Activated CD4-positive, alpha-beta T cell treated with anti-CD3 and anti-CD28 coated beads for 36 hours (primary cell): ENCODE measurements at regions of chr7 and their contacts with region 1.

Region 1: DNA sequence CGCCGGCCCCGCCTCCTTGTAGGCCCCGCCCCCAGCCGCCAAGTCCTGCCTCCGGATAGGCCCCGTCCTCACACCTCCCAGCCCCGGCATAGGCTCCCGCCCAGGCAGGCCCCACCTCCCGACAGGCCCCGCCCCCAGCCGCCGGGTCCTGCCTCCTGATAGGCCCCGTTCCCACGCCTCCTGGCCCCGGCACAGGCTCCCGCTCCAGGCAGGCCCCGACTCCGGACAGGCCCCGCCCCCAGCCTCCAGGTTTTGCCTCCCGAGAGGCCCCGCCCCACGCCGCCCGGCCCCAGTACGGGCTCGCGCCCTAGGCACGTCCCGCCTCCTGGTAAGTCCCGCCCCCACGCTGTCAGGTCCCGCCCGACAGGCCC is 237 bp upstream of the MICALL2 start:
- DNase-seq: peak; percentile 100
- ATAC-seq: peak; percentile 98
- H3K4me3 Mint-ChIP-seq: peak overlapping the region; percentile 59
- H3K27ac Mint-ChIP-seq: no peak overlapping the region
- H3K4me1 Mint-ChIP-seq: peaks cover 7% of the 10 kb centered on the region
- H3K27me3 Mint-ChIP-seq: no peaks in the 10 kb centered on the region

Region 2: GRCh38 chr7:1137510-1138167 is 321.9 kb before region 1 on chr7:
- CTCF ChIA-PET with region 1: no interaction called
- POLR2A ChIA-PET with region 1: no interaction called
- intact Hi-C with region 1: loop called in 1 of 2 experiments (anchors 1 kb)
- DNase-seq: no peak
- ATAC-seq: peak; percentile 54
- H3K4me3 Mint-ChIP-seq: peak overlapping the region; percentile 75
- H3K27ac Mint-ChIP-seq: peak overlapping the region; percentile 69
- H3K4me1 Mint-ChIP-seq: peaks cover 21% of the 10 kb centered on the region
- H3K27me3 Mint-ChIP-seq: no peaks in the 10 kb centered on the region

Region 3: DNA sequence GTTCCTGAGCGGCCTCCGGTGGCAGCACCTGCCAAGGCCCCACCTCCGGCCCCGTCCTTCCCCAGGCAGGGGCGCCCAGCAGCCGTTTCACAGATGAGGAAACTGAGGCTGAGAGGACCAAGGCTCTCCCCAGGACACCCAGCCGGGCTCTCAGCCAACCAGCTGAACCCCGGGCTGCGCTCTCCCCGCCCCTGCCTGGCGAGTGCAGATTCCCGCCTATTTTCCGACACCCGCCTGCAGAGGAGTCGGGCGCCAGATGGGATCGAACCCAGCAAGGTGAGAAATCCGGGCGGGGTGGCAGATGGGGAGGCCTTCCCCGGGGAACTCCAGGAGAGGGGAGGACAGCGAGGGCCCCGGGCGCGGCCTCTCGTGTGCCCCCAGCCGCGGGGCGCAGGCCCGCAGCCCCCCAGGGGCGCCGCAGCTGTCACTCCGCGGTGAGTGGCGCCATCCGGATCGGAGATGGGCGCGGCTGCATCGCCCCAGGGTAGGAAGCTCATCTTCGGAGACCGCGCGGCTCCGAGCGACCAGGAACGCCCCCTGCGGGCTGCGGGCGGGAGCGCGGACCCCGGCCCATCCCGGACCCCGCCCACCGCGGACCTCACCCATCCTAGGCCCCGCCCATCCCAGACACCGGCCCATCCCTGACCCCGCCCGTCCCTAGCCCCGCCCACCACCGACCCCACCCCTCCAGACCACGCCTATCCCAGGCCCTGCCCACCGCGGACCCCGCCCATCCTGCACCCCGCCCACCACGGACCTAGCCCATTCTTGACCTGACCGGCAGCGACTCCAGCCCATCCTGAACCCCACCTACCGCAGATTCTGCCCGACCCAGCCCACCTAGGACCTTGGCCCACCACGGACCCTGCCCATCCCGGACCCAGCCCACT is 90.6 kb before region 1 on chr7:
- CTCF ChIA-PET with region 1: no interaction called
- POLR2A ChIA-PET with region 1: no interaction called
- intact Hi-C with region 1: loop called in 1 of 2 experiments (anchors 1 kb)
- DNase-seq: peak; percentile 76
- ATAC-seq: peak; percentile 81
- H3K4me3 Mint-ChIP-seq: no peak overlapping the region
- H3K27ac Mint-ChIP-seq: no peak overlapping the region
- H3K4me1 Mint-ChIP-seq: no peaks in the 10 kb centered on the region
- H3K27me3 Mint-ChIP-seq: peaks cover 43% of the 10 kb centered on the region

Region 4: DNA sequence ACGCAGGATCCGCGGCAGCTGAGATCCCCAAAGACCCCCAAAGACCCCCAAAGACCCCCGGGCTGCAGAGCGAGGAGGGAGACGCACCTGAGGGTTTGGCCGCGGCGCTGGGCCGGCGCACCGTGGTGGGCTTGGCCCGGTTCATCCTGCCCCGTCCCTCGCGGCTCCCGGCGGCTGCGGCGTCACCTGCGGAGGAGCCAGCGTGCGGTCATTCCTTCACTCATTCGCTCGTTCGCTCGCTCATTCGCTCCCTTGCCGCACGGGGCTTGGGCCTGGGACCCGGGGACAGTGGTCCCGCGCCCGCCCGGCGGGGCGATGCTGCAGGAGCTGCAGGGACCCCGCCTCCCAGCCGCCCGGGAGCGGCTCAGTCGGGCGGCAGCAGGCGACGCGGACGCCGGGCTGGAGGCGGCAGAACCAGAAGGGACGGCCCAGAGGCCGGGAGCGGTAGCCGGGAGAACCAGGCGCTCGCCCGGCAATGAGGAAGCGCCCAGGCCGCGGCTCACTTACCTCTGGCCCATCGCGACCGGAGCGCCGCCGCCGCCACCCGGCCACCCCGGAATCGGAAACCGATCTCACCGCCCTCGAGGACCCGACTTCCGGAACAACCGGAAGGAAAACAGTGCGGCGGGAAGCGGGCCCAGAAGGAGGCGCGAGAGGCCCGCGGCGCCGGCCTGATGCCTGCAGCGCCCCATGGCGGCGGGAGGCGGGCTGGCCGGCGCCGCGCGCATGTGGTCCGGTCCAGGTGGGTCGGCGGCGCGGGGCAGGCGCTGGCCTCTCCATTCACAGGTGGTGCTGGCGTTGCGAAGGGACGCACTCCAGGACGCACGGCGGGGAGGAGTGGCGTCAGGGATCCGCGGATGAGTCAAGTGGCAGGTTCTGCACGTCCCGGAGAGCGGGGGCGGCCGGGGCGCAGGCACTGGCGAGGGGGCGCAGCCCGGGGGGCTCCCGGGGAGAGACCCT is 44.6 kb after region 1 on chr7 and contains the start of gene INTS1:
- CTCF ChIA-PET with region 1: no interaction called
- POLR2A ChIA-PET with region 1: no interaction called
- intact Hi-C with region 1: loop called (anchors 1 to 2 kb)
- DNase-seq: peak; percentile 95
- ATAC-seq: peak; percentile 88
- H3K4me3 Mint-ChIP-seq: peak within 1 kb of the TSS; percentile 85
- H3K27ac Mint-ChIP-seq: peak within 1 kb of the TSS; percentile 87
- H3K4me1 Mint-ChIP-seq: peaks cover 41% of the 10 kb centered on the region
- H3K27me3 Mint-ChIP-seq: no peaks in the 10 kb centered on the region
- total RNA-seq, gene INTS1: 78.1 to 81.7 TPM

Region 5: DNA sequence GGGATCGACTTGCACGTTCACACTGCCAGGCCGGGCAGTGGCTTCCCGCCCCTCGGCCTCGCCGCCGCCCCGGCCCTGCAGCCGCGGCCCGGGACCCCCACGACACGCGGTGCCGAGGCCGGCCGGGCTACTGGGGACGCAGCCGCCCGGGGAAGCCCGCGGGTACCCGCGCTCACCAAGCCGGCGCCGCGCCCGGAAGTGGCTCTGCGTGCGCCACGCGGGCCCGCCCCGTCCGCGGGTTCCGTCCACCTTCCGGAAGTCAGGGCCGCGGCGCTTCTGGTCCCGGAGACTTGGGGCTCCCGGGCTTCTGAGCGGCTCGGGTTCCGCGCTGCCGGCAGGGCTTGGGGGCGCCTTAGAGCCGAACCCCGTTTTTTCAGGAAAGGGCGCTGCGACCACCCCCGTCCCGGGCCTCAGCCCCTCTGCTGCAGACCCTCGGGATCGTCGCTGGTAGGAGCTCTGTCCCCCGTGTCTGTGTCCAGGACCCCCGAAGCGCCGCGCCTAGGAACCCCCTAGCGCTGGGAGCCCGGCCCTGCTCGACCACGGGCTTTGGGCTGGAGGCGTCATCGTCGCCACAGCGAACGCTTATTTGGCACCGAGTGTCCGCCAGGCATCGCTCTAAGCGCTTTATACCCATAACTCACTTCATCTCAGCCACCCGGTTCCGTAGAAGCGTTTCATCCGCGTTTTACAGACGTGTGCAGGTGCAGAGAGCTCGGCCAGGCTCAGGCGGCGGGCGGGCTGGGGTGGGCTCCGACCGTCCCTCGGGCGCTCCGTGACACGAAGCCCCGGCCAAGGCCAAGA is 110.5 kb after region 1 on chr7 and contains the start of gene PSMG3:
- CTCF ChIA-PET with region 1: no interaction called
- POLR2A ChIA-PET with region 1: no interaction called
- intact Hi-C with region 1: loop called in 1 of 2 experiments (anchors 1 kb)
- DNase-seq: peak; percentile 94
- ATAC-seq: peak; percentile 95
- H3K4me3 Mint-ChIP-seq: peak within 1 kb of the TSS; percentile 86
- H3K27ac Mint-ChIP-seq: peak within 1 kb of the TSS; percentile 92
- H3K4me1 Mint-ChIP-seq: peaks cover 37% of the 10 kb centered on the region
- H3K27me3 Mint-ChIP-seq: no peaks in the 10 kb centered on the region
- total RNA-seq, gene PSMG3: 21.4 to 33.0 TPM

Region 6: GRCh38 chr7:2632733-2633537 is 1173.4 kb after region 1 on chr7:
- CTCF ChIA-PET with region 1: no interaction called
- POLR2A ChIA-PET with region 1: no interaction called
- intact Hi-C with region 1: loop called in 1 of 2 experiments (anchors 1 kb)
- DNase-seq: peak; percentile 77
- ATAC-seq: peak; percentile 7
- H3K4me3 Mint-ChIP-seq: peak overlapping the region; percentile 91
- H3K27ac Mint-ChIP-seq: peak overlapping the region; percentile 84
- H3K4me1 Mint-ChIP-seq: peaks cover 14% of the 10 kb centered on the region
- H3K27me3 Mint-ChIP-seq: no peaks in the 10 kb centered on the region